Dendritic cell treated with granulocyte-macrophage colony-stimulating factor and Interleukin-4, amounts not matched to agents 40 ng/mL and 50 ng/mL, for 4 days (primary cell): ENCODE measurements at regions of chr1 and their contacts with region 1.

Region 1: GRCh38 chr1:171741872-171742576 is at the start of gene VAMP4:
- H3K4me3 Mint-ChIP-seq: peak within 1 kb of the TSS; percentile 98
- H3K27ac Mint-ChIP-seq: peak within 1 kb of the TSS; percentile 93
- H3K4me1 Mint-ChIP-seq: peaks cover 43% of the 10 kb centered on the region
- H3K27me3 Mint-ChIP-seq: no peaks in the 10 kb centered on the region

Region 2: GRCh38 chr1:171355727-171356126 is 386.3 kb before region 1 on chr1:
- intact Hi-C with region 1: no loop called
- H3K4me3 Mint-ChIP-seq: no peak overlapping the region
- H3K27ac Mint-ChIP-seq: no peak overlapping the region
- H3K4me1 Mint-ChIP-seq: peaks cover under 1% of the 10 kb centered on the region
- H3K27me3 Mint-ChIP-seq: no peaks in the 10 kb centered on the region

Region 3: GRCh38 chr1:171841050-171841940 is 99.3 kb after region 1 on chr1 and contains the start of gene DNM3:
- intact Hi-C with region 1: loop called (anchors 5 kb)
- H3K4me3 Mint-ChIP-seq: peak within 1 kb of the TSS; percentile 91
- H3K27ac Mint-ChIP-seq: peak within 1 kb of the TSS; percentile 68
- H3K4me1 Mint-ChIP-seq: peaks cover 26% of the 10 kb centered on the region
- H3K27me3 Mint-ChIP-seq: peaks cover 26% of the 10 kb centered on the region